ENCODE measurements at regions of chr11 and their contacts with region 1.

Region 1: GRCh38 chr11:6234387-6235107 is at the start of gene FHIP1B:
- DNase-seq: peak; percentile 100
- H3K4me3 Mint-ChIP-seq: peak within 1 kb of the TSS; percentile 94
- H3K27ac Mint-ChIP-seq: peak within 1 kb of the TSS; percentile 82
- H3K4me1 Mint-ChIP-seq: peaks cover 32% of the 10 kb centered on the region
- H3K27me3 Mint-ChIP-seq: no peaks in the 10 kb centered on the region
- total RNA-seq, gene FHIP1B: 13.0 to 13.1 TPM

Region 2: DNA sequence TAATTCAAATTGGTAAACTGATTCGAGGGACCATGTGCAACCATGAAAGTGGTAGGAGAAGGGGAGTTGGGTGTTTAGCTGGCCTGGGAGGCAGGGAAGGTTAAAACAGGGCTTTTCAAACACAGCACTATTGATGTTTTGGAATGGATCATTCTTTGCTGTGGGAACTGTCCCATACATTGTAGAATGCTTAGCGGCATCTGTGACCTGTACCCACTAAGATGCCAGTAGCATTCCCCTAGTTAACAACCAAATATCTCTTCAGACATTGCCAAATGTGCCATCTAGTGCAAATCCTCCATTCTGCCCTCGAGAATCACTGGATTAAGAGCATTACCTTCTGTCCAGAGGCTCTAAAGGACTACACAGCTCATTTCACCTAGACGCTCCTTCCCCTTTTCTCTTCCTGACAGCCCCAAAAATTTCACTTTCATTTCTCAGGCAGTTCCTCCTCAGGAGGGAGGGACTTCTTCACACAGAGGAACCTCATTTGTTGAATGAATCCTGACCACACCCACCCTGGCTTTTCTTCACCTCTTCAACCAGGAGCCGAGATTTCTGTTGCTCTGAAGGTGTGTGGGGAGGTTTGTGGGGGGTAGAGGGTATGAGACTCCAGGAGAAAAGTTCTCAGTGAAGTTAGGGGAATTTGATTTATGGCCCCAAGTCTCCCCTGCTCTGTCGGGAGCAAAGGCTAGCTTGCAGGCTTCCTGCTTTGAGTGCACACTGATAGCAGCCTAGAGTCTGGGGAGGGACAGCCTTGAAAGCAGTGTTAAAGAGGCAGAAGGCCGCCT is 609.9 kb before region 1 on chr11 and contains the start of gene TRIM34:
- CTCF ChIA-PET with region 1: no interaction called
- intact Hi-C with region 1: loop called (anchors 10 kb)
- DNase-seq: peak; percentile 73
- H3K4me3 Mint-ChIP-seq: peak within 1 kb of the TSS; percentile 87
- H3K27ac Mint-ChIP-seq: peak within 1 kb of the TSS; percentile 88
- H3K4me1 Mint-ChIP-seq: peaks cover 31% of the 10 kb centered on the region
- H3K27me3 Mint-ChIP-seq: no peaks in the 10 kb centered on the region
- total RNA-seq, gene TRIM34: 12.8 to 12.9 TPM

Region 3: GRCh38 chr11:5783255-5783654 is 451.3 kb before region 1 on chr11 and contains the start of gene OR52N5:
- CTCF ChIA-PET with region 1: no interaction called
- intact Hi-C with region 1: no loop called
- DNase-seq: no peak
- H3K4me3 Mint-ChIP-seq: no peak within 1 kb of the TSS
- H3K27ac Mint-ChIP-seq: no peak within 1 kb of the TSS
- H3K4me1 Mint-ChIP-seq: peaks cover 6% of the 10 kb centered on the region
- H3K27me3 Mint-ChIP-seq: peaks cover 2% of the 10 kb centered on the region
- total RNA-seq, gene OR52N5: not detected

Region 4: DNA sequence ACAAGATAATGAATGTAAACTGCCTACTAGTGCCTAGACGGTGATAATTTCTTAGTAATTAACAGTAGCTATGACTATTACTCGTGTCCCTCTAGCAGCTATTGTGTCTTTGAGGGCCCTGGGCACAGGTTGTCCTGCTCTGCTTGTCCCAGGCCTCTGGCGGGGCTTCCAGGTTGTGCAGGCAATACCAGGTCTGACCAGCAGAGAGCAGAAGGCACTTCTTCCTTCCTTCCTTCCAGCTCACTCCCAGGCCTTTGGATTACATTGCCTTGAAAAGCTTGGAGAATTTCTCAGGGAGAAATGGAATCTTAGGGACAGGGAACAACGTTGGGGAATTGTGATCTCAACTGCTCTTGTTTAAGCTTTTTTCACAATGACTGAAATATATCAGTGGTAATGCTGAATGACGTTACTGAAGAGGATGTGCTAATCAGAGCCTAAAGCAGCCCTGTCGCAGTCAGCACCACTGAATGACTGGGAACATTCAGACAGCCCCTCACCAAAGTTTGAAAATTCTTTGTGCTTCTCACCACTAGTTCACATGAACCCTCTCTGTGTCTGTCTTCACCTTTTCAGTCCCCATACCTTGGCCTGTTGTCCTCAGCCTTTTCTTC is 16.7 kb after region 1 on chr11:
- CTCF ChIA-PET with region 1: interaction called, 42 read pairs
- intact Hi-C with region 1: no loop called
- DNase-seq: peak; percentile 73
- H3K4me3 Mint-ChIP-seq: no peak overlapping the region
- H3K27ac Mint-ChIP-seq: no peak overlapping the region
- H3K4me1 Mint-ChIP-seq: no peaks in the 10 kb centered on the region
- H3K27me3 Mint-ChIP-seq: no peaks in the 10 kb centered on the region

Region 5: DNA sequence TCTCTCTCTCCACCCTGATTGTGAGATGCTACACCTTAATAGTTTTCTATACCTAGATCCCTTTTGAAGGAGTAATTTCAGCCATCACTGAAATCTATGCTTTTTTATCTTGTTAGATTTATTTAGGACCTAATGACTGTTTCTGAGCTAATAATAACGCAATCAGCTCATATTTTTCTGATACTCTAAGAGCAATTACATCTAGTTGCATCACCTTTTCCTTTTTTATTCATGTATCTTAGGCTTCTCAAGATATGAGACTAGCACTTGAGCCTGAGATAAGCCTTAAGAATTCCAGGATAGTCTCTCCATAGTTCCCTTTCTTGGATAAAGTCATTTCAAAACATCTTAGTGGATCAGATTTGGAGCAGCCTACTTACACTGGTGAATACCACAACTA is 110.8 kb after region 1 on chr11:
- CTCF ChIA-PET with region 1: interaction called, 11 read pairs
- intact Hi-C with region 1: no loop called
- DNase-seq: no peak
- H3K4me3 Mint-ChIP-seq: no peak overlapping the region
- H3K27ac Mint-ChIP-seq: no peak overlapping the region
- H3K4me1 Mint-ChIP-seq: no peaks in the 10 kb centered on the region
- H3K27me3 Mint-ChIP-seq: peaks cover 2% of the 10 kb centered on the region

Region 6: DNA sequence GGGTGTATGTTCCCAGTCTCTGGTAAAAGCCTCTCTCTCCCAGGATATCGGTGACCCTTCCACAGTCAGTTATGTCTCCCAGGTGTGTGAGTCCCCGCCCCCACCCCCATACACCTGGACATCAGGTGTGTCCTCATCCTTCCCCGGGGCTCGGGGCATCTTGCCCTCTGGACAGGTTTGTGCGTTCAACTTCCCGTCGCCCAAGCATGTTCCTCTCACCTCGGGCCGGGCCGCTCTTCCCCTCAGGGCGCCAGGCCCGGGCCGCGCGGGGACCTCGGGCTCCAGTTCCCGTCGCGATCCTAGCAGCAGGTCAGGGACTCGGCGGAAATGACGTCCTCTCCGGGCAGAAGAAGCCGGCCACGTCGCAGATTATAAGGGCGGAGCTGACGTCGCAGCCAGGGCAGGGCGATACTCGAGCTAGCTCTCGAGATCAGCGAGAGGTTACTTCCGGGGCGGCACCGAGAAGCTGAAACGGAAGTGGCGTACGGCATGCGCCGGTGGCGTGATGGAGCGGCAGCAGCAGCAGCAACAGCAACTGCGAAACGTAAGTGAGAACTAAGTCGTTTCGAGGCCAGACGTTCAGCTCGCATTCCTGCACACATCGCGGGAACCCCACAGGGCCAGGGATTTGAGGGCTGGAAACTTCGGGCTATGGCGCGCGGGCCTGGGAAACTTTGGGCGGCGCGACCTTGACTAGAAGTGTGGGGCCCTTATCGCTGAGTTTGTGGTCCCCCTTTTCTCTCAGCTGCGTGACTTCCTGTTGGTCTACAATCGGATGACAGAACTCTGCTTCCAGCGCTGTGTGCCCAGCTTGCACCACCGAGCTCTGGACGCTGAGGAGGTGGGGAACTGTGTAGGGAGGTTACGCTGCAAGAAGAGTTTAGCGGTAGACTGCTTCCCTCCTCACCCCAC is 246.7 kb after region 1 on chr11 and contains the starts of genes ARFIP2 and TIMM10B:
- CTCF ChIA-PET with region 1: no interaction called
- intact Hi-C with region 1: loop called (anchors 1 kb)
- DNase-seq: peak; percentile 99
- H3K4me3 Mint-ChIP-seq: peak within 1 kb of the TSS; percentile 94
- H3K27ac Mint-ChIP-seq: peak within 1 kb of the TSS; percentile 96
- H3K4me1 Mint-ChIP-seq: peaks cover 38% of the 10 kb centered on the region
- H3K27me3 Mint-ChIP-seq: no peaks in the 10 kb centered on the region
- total RNA-seq, gene ARFIP2: 33.5 to 37.9 TPM
- total RNA-seq, gene TIMM10B: 35.1 to 41.7 TPM

Region 7: DNA sequence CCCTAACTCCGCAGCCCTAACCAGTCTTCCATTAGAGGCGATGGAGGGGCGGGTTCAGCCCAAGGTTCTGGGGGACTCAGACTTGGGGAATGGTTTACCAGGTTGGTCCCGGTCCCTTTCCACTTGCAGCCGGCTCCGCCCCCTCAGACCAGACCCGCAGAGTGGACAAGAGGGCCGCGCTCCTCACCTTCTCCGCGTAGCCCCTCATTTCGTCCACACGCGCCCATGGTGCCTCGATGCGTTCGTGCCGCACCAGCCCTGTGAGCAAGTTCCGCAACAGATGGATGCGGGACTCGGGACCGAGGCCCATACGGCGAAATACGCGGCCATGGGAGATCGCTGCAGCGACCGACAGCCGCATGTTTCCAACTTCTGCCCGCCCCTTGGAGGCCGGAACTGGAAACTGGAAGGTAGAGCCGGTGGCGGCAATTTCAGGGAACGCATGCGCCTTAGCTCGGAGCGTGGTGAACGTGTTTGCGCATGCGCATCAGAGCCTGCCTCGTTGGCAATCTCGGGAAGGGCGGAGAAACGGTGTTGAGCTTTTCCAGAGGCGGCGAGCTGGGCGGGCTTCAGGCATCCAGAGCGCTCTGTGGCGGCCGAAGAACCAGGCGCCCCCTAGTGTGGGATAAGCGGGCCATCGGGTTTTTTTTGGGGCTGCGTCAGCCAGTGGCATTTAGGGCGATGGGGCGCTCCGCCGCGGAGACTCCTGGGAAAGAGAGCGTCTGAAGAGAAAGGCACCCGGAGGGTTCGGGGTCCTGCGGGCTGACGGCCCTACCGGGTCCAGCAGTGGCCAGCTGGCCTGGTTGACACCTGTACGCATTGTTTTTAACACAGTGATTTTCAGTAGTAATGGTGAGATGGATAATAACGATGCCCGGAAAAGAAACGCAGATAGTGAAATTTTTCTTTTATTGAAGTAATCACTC is 448.7 kb after region 1 on chr11 and contains the start of gene MRPL17:
- CTCF ChIA-PET with region 1: no interaction called
- intact Hi-C with region 1: loop called (anchors 1 kb)
- DNase-seq: peak; percentile 100
- H3K4me3 Mint-ChIP-seq: peak within 1 kb of the TSS; percentile 97
- H3K27ac Mint-ChIP-seq: peak within 1 kb of the TSS; percentile 98
- H3K4me1 Mint-ChIP-seq: peaks cover 35% of the 10 kb centered on the region
- H3K27me3 Mint-ChIP-seq: no peaks in the 10 kb centered on the region
- total RNA-seq, gene MRPL17: 99.7 to 102 TPM

Region 8: GRCh38 chr11:7986768-7987559 is 1752.4 kb after region 1 on chr11 and contains the start of gene EIF3F:
- CTCF ChIA-PET with region 1: no interaction called
- intact Hi-C with region 1: loop called (anchors 10 kb)
- DNase-seq: peak; percentile 94
- H3K4me3 Mint-ChIP-seq: peak within 1 kb of the TSS; percentile 88
- H3K27ac Mint-ChIP-seq: peak within 1 kb of the TSS; percentile 92
- H3K4me1 Mint-ChIP-seq: peaks cover 37% of the 10 kb centered on the region
- H3K27me3 Mint-ChIP-seq: no peaks in the 10 kb centered on the region
- total RNA-seq, gene EIF3F: 365 to 380 TPM

Measured in activated naive CD4-positive, alpha-beta T cell treated with anti-CD3 and anti-CD28 coated beads for 36 hours (primary cell).